IMR-90 (cell line): ENCODE measurements at regions of chr9 and their contacts with region 1.

Region 1: DNA sequence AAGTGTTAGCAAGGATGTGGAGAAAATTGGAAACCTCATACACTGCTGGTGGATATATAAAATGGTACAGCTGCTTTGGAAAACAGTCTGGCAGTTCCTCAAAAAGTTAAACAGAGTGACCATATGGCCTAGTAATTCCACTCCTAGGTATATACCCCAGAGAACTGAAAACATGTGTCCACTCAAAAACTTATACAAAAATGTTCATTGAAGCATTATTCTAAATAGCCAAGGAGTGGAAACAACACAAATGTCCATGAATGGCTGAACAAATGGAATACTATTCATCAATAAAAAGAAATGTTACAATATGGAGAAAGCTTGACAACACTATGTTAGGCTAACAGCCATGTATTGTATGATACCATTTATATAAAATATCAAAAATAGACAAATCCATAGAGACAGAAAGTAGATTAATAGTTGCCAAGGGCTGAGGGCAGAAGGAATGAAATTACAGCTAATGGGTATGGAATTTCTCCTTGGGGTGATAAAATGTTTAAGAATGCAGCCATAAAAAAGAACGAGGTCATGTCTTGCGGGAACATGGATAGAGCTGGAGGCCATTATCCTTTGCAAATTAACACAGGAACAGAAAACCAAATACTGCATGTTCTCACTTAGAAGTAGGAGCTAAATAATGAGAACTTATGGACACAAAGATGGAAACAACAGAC is 33.6 kb upstream of the FBP1 start:
- DNase-seq: peak; percentile 67
- ATAC-seq: peak; percentile 68
- H3K4me3 ChIP-seq: no peak overlapping the region
- H3K27ac ChIP-seq: peak overlapping the region; percentile 19; the same call in 1 of the 2 replicates
- H3K4me1 ChIP-seq: peaks cover 9% of the 10 kb centered on the region; the same call in 1 of the 2 replicates
- H3K27me3 ChIP-seq: no peaks in the 10 kb centered on the region
- CTCF ChIP-seq: no peak
- POLR2A ChIP-seq: no peak
- RAD21 ChIP-seq: no peak

Region 2: GRCh38 chr9:94603259-94604160 is 69.4 kb before region 1 on chr9:
- CTCF ChIA-PET with region 1: no interaction called
- POLR2A ChIA-PET with region 1: no interaction called
- dilution Hi-C with region 1: no loop called
- in situ Hi-C with region 1: no loop called
- intact Hi-C with region 1: no loop called
- DNase-seq: peak; percentile 61
- ATAC-seq: peak; percentile 97
- H3K4me3 ChIP-seq: no peak overlapping the region
- H3K27ac ChIP-seq: no peak overlapping the region
- H3K4me1 ChIP-seq: no peaks in the 10 kb centered on the region
- H3K27me3 ChIP-seq: peaks cover 33% of the 10 kb centered on the region
- CTCF ChIP-seq: peak; percentile 60
- POLR2A ChIP-seq: no peak
- RAD21 ChIP-seq: peak; percentile 54

Region 3: GRCh38 chr9:95008151-95008771 is 335.3 kb after region 1 on chr9:
- CTCF ChIA-PET with region 1: no interaction called
- POLR2A ChIA-PET with region 1: no interaction called
- dilution Hi-C with region 1: no loop called
- in situ Hi-C with region 1: no loop called
- intact Hi-C with region 1: no loop called
- DNase-seq: no peak
- ATAC-seq: no peak
- H3K4me3 ChIP-seq: peak overlapping the region; percentile 9
- H3K27ac ChIP-seq: peak overlapping the region; percentile 70
- H3K4me1 ChIP-seq: peaks cover 10% of the 10 kb centered on the region
- H3K27me3 ChIP-seq: no peaks in the 10 kb centered on the region
- CTCF ChIP-seq: no peak
- POLR2A ChIP-seq: no peak; the same call in 1 of the 2 replicates
- RAD21 ChIP-seq: no peak

Region 4: GRCh38 chr9:95127249-95128176 is 454.6 kb after region 1 on chr9:
- CTCF ChIA-PET with region 1: interaction called, 7 read pairs
- POLR2A ChIA-PET with region 1: no interaction called
- dilution Hi-C with region 1: no loop called
- in situ Hi-C with region 1: no loop called
- intact Hi-C with region 1: loop called (anchors 1 kb)
- DNase-seq: peak; percentile 71
- ATAC-seq: peak; percentile 99
- H3K4me3 ChIP-seq: peak overlapping the region; percentile 27; the same call in 1 of the 2 replicates
- H3K27ac ChIP-seq: no peak overlapping the region
- H3K4me1 ChIP-seq: peaks cover 2% of the 10 kb centered on the region; the same call in 1 of the 2 replicates
- H3K27me3 ChIP-seq: no peaks in the 10 kb centered on the region
- CTCF ChIP-seq: peak; percentile 99
- POLR2A ChIP-seq: no peak
- RAD21 ChIP-seq: peak; percentile 87